GM12878 (cell line): ENCODE measurements at regions of chr3 and their contacts with region 1.

Region 1: DNA sequence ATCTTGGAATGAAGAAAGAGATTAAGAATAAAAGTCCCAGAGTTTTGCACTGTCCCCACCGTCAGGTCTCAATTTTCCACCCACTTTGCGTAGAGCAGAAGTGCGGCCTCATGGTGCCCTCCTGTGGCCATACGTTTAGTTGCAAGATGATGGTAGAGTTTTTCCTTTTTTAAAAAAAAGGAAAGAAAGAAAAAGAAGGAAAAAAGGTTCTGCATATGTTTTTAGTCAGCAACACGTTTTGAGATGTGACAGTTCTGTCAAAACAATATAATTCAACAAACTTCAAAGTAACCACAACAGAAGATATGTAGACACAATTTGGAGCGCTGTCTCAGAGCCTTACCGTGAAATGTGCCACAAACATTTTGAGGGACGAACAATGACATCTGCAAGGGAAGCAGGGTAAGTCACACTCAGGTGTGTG is 24.6 kb downstream of the EBLN2 start:
- DNase-seq: no peak
- ATAC-seq: peak; percentile 76
- H3K4me3 ChIP-seq: no peak overlapping the region
- H3K27ac ChIP-seq: no peak overlapping the region
- H3K4me1 ChIP-seq: no peaks in the 10 kb centered on the region
- H3K27me3 ChIP-seq: no peaks in the 10 kb centered on the region
- CTCF ChIP-seq: peak; percentile 67 to 89 (median 72)
- EP300 ChIP-seq: no peak
- POLR2A ChIP-seq: no peak
- RAD21 ChIP-seq: peak; percentile 98

Region 2: DNA sequence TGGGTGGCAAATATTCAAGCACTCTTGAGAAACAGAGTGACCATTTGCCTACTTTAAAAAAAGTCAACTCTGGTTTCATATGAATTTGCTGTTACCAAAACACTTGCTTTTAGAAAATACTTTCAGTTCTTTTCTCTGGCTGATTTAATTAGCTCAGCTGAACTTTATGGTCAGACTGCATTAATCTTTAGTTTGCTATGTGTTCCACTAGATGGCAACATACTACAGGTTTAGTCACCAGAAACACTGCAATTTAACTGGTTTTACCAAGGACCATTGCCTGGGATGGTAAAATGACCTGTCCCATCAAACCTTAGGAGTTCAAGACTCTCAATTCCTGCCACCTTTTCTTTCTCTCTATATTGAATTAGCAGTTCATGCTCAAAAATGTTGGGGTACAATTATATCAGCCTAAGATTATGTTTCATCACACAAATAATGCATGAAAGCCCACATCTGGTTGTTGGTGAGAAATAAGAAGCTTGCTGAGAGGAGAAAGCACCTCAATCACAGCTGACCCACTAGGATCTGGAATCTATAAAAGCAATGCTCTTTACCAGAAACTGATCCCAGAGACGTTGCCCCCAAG is 1375.1 kb before region 1 on chr3:
- CTCF ChIA-PET with region 1: interaction called, 3 read pairs
- POLR2A ChIA-PET with region 1: no interaction called
- RAD21 ChIA-PET with region 1: interaction called, 5 read pairs
- SMC1A ChIA-PET with region 1: interaction called, 3 read pairs
- in situ Hi-C with region 1: no loop called
- intact Hi-C with region 1: loop called (anchors 2 kb)
- DNase-seq: peak; percentile 21
- ATAC-seq: peak; percentile 89
- H3K4me3 ChIP-seq: no peak overlapping the region
- H3K27ac ChIP-seq: no peak overlapping the region
- H3K4me1 ChIP-seq: no peaks in the 10 kb centered on the region
- H3K27me3 ChIP-seq: 0 out of 4 replicates have a peak, but pooled peaks cover 0 to 3% of the 10 kb centered on the region in 2 experiments
- CTCF ChIP-seq: peak; percentile 49 to 74 (median 62); a peak in 5 of 6 replicates
- EP300 ChIP-seq: no peak
- POLR2A ChIP-seq: no peak
- RAD21 ChIP-seq: peak; percentile 84

Region 3: GRCh38 chr3:71734883-71735282 is 1351.2 kb before region 1 on chr3:
- CTCF ChIA-PET with region 1: interaction called, 3 read pairs
- POLR2A ChIA-PET with region 1: no interaction called
- RAD21 ChIA-PET with region 1: no interaction called
- SMC1A ChIA-PET with region 1: no interaction called
- in situ Hi-C with region 1: loop called (anchors 10 kb)
- intact Hi-C with region 1: no loop called
- DNase-seq: no peak
- ATAC-seq: no peak
- H3K4me3 ChIP-seq: no peak overlapping the region
- H3K27ac ChIP-seq: no peak overlapping the region
- H3K4me1 ChIP-seq: no peaks in the 10 kb centered on the region
- H3K27me3 ChIP-seq: peaks cover 0 to 4% of the 10 kb centered on the region in 2 experiments; a peak in 2 of 4 replicates
- CTCF ChIP-seq: no peak
- EP300 ChIP-seq: no peak
- POLR2A ChIP-seq: no peak
- RAD21 ChIP-seq: no peak

Region 4: GRCh38 chr3:72722930-72723726 is 363.0 kb before region 1 on chr3:
- CTCF ChIA-PET with region 1: no interaction called
- POLR2A ChIA-PET with region 1: no interaction called
- RAD21 ChIA-PET with region 1: no interaction called
- SMC1A ChIA-PET with region 1: no interaction called
- in situ Hi-C with region 1: no loop called
- intact Hi-C with region 1: no loop called
- DNase-seq: peak; percentile 35
- ATAC-seq: peak; percentile 97
- H3K4me3 ChIP-seq: no peak overlapping the region
- H3K27ac ChIP-seq: no peak overlapping the region; the same call in 1 of the 2 replicates
- H3K4me1 ChIP-seq: peaks cover 8% of the 10 kb centered on the region; the same call in 1 of the 2 replicates
- H3K27me3 ChIP-seq: no peaks in the 10 kb centered on the region
- CTCF ChIP-seq: no peak
- EP300 ChIP-seq: peak; percentile 67 to 76
- POLR2A ChIP-seq: no peak
- RAD21 ChIP-seq: no peak

Region 5: DNA sequence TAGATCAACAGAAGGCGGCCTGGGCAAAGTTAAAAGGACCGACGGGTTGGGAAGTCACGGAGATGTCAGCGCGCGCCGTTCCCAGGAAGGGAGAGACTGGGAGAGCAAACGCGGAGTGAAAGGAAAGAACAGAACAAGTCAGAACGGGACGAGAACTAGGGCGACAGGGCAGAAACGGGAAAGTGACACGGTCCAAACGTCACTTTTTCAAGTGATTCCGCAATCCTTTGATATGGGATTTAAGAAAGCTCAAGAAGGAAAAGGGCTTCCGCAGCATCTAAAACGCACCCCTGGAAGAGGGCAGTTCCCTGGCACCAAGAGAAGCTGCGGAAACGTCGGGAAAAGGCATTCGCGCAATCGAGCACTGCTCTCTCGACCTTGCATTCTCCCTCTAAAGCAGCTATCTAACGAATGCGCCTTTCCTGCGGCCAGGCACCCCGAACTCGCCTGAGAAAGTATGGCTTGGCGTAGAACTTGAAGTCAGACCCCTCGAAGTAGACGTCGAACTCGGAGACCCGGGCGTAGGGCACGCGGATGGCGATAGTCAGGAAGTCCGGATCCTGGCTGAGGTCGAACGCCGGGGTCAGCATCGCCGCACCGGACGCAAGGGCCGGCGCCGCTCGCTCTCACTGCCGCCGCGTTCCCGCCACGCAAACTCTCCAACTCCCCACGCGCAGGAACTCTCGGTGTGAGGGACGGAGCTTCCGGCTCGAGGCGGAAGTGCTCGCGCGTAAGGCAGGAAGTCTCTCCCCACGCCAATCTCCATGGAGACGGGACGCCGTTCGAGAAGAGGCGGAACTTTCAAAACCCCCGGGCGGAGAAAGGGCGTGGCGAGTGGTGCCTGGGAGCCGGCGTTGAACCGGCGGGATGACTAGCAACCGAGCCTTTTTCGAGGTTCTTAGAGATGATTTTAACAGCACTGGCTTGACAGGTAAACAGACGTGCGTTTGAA is 238.1 kb before region 1 on chr3 and contains the start of gene SHQ1:
- CTCF ChIA-PET with region 1: interaction called, 54 read pairs
- POLR2A ChIA-PET with region 1: no interaction called
- RAD21 ChIA-PET with region 1: interaction called, 26 read pairs
- SMC1A ChIA-PET with region 1: interaction called, 24 read pairs
- in situ Hi-C with region 1: loop called (anchors 5 kb)
- intact Hi-C with region 1: loop called (anchors 1 kb)
- DNase-seq: peak; percentile 81
- ATAC-seq: peak; percentile 88
- H3K4me3 ChIP-seq: peak within 1 kb of the TSS; percentile 97
- H3K27ac ChIP-seq: peak within 1 kb of the TSS; percentile 79
- H3K4me1 ChIP-seq: peaks cover 35% of the 10 kb centered on the region
- H3K27me3 ChIP-seq: no peaks in the 10 kb centered on the region
- CTCF ChIP-seq: no peak
- EP300 ChIP-seq: no peak
- POLR2A ChIP-seq: peak; percentile 88
- RAD21 ChIP-seq: no peak
- polyA plus RNA-seq, gene SHQ1: 12.6 to 12.8 TPM

Region 6: DNA sequence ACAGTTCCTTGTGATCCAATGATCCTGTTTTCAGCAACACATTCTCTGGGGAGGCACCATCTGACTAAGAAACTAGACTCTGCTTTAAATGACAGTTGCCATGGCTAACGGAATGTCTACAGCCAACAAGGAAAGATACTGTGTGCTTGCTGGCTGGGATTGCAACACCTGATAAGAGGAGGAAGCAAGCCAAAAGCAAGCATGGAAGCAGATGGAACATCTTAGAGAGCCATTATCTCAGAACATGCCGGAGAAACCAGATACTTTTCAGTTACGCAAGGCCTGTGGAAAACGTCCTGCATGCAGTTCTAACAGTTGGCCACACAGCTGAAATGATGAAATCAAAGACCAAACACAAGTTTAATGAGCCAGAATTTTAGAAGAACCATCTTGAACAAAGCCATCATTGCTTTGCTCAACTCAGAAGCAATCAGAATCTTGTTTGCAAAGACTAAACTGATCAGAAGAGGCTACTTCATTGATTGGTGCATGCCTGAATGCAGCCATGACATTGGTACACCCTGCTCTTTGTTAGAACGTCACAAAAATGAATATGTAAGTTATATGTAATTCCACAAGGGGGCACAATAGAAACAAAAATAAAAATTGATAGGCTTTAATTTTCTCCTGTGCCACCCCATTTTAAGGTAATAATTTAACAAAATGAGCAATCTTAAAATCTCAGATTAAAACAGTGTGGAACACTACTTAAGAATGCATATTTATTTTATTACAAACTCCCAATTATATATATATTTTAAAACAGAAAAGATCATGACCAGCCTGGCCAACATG is 147.4 kb before region 1 on chr3:
- CTCF ChIA-PET with region 1: interaction called, 10 read pairs
- POLR2A ChIA-PET with region 1: no interaction called
- RAD21 ChIA-PET with region 1: interaction called, 16 read pairs
- SMC1A ChIA-PET with region 1: interaction called, 13 read pairs
- in situ Hi-C with region 1: loop called (anchors 5 kb)
- intact Hi-C with region 1: loop called (anchors 1 kb)
- DNase-seq: no peak
- ATAC-seq: peak; percentile 98
- H3K4me3 ChIP-seq: no peak overlapping the region
- H3K27ac ChIP-seq: no peak overlapping the region
- H3K4me1 ChIP-seq: no peaks in the 10 kb centered on the region
- H3K27me3 ChIP-seq: no peaks in the 10 kb centered on the region
- CTCF ChIP-seq: peak; percentile 39 to 51 (median 41); a peak in 4 of 6 replicates
- EP300 ChIP-seq: no peak
- POLR2A ChIP-seq: no peak
- RAD21 ChIP-seq: peak; percentile 67

Region 7: DNA sequence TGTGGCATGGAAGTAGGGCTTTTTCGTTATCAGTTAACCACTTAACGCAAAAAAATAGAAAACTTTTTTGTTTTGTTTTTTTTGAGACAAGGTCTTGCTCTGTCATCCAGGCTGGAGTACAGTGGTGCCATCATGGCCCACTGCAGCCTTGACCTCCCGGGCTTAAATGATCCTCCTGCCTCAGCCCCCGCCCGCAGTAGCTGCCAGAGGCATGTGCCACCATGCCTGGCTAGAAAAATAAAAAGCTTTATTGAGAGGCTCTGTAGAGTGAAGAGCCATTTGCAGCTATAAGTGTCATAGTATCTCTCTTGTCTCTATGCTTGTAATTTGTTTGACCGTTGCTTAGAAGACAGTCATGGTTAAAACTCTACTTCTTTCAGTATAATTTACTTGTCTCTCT is 75.9 kb before region 1 on chr3:
- CTCF ChIA-PET with region 1: no interaction called
- POLR2A ChIA-PET with region 1: no interaction called
- RAD21 ChIA-PET with region 1: no interaction called
- SMC1A ChIA-PET with region 1: no interaction called
- in situ Hi-C with region 1: no loop called
- intact Hi-C with region 1: no loop called
- DNase-seq: no peak
- ATAC-seq: no peak
- H3K4me3 ChIP-seq: no peak overlapping the region
- H3K27ac ChIP-seq: no peak overlapping the region
- H3K4me1 ChIP-seq: no peaks in the 10 kb centered on the region
- H3K27me3 ChIP-seq: no peaks in the 10 kb centered on the region
- CTCF ChIP-seq: no peak
- EP300 ChIP-seq: no peak
- POLR2A ChIP-seq: no peak
- RAD21 ChIP-seq: no peak